ENCODE measurements at regions of chr11 and their contacts with region 1.

Region 1: DNA sequence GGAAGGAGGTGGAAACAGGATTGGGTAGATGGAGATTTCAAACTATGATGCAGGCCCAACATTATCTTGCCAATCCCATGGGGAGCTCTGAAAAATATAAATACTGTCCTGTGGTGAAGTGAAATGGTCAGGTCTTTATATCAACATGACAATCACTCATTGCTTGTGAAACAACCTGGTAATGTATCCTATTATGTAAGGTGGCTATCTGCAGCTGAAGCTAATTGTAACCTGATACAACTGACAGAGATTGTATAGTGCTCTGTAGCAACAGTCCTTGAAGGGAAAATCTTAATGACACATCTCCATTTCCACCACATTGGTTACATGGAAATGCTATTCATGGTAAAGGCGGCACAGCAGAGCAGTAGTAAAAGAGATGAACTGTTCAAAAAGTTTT is 20.7 kb upstream of the CHORDC1 start:
- DNase-seq: no peak
- H3K4me3 Mint-ChIP-seq: no peak overlapping the region
- H3K27ac Mint-ChIP-seq: no peak overlapping the region
- H3K4me1 Mint-ChIP-seq: peaks cover 20% of the 10 kb centered on the region
- H3K27me3 Mint-ChIP-seq: peaks cover 9% of the 10 kb centered on the region

Region 2: DNA sequence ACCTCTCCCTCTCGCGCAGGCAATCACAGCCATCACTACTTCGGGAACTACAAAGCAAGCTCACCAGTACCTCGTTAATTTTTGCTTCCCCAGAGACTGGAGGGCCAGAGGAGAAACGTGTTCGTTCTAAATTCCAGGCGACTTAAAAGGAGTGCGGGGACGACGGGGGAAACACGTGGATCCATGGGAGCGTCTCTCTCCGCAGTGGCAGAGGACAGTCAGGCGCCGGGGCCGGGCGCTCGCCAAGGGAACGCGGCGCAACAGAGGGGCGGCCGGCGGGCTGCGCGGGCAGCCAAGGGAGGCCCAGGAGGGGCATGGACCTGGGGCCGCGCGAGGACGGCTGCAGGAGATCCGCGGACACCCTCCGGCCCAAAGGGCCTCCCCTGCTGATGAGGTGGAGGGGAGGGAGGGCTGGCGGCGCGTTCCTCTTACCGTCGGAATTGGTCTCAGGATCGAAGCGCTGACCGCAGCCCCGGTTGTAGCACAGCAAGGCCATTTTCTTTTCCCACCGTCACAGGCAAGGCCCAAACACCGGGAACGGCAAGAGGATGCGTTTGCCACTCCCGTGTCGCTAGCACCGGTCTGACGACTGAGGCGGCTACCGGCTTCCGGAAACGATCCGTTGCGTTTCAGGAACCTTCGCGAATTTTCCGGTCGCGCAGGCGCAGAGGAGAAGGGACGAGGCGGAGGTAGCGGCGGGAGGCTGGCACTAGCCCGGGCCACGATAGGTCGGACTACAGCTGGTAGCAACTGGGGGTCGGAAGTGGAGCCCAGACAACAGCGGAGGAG is 20.9 kb before region 1 on chr11 and contains the start of gene CHORDC1:
- CTCF ChIA-PET with region 1: no interaction called
- POLR2A ChIA-PET with region 1: no interaction called
- intact Hi-C with region 1: loop called (anchors 1 kb)
- DNase-seq: peak; percentile 97
- H3K4me3 Mint-ChIP-seq: peak within 1 kb of the TSS; percentile 98
- H3K27ac Mint-ChIP-seq: peak within 1 kb of the TSS; percentile 93
- H3K4me1 Mint-ChIP-seq: peaks cover 42% of the 10 kb centered on the region
- H3K27me3 Mint-ChIP-seq: no peaks in the 10 kb centered on the region
- total RNA-seq, gene CHORDC1: 62.6 to 71.0 TPM

Measured in activated CD4-positive, alpha-beta memory T cell treated with anti-CD3 and anti-CD28 coated beads for 36 hours (primary cell).